ENCODE measurements at regions of chr15 and their contacts with region 1.

Region 1: DNA sequence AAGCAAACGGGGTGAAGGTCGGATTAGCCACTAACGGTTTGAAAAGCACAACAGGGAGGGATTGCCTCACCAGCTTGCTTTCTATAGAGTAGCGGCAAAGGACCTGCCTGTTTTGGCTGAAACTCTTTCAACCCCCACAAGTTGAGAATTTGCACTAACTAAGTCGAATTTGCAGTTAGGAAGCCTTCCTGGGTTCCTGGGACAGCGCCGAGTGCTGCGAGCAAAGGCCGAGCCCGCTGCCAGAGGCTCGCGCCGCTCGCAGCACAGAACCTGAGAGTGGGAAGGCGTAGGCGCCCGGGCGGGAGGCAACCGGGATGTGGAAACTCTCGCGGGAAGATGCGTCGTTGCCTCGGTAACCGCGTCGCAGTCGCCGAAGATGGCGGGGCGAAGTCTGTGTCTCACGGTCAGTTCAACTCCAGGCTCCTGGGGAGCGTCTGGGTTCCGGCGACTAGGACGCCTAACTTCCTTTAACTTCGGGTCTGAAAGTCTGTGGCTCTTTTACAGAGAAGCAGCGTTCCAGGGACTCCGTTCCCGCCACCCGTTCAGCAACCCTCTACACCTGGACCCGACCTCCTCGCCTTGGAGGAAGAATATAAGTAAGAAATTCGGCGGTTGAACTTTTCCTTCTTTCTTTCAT is at the start of gene TEX9:
- DNase-seq: peak; percentile 82
- H3K4me3 ChIP-seq: peak within 1 kb of the TSS; percentile 53 to 70 (median 69)
- H3K27ac ChIP-seq: peak within 1 kb of the TSS; percentile 31
- H3K4me1 ChIP-seq: peaks cover 16% of the 10 kb centered on the region
- H3K27me3 ChIP-seq: no peaks in the 10 kb centered on the region
- CTCF ChIP-seq: no peak
- total RNA-seq, gene TEX9: 7.7 to 11.2 TPM

Region 2: DNA sequence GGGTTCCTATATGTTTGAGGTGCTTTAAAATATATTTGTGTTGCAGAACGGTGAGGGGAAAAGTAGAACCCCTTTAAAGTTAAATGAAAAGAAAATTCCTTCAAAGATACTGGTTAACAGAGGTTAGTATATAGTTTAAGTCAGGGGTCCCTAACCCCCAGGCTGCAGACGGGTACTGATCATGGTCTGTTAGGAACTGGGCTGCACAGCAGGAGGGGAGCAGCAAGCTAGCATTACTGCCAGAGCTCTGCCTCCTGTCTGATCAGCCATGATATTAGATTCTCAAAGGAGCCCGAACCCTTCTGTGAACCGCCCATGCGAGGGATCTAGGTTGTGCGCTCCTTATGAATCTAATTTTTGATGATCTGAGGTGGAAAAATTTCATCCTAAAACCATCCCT is 84.0 kb before region 1 on chr15:
- CTCF ChIA-PET with region 1: no interaction called
- dilution Hi-C with region 1: no loop called
- in situ Hi-C with region 1: no loop called
- intact Hi-C with region 1: no loop called
- DNase-seq: no peak
- H3K4me3 ChIP-seq: no peak overlapping the region
- H3K27ac ChIP-seq: no peak overlapping the region
- H3K4me1 ChIP-seq: no peaks in the 10 kb centered on the region
- H3K27me3 ChIP-seq: peaks cover 7% of the 10 kb centered on the region
- CTCF ChIP-seq: no peak

Region 3: DNA sequence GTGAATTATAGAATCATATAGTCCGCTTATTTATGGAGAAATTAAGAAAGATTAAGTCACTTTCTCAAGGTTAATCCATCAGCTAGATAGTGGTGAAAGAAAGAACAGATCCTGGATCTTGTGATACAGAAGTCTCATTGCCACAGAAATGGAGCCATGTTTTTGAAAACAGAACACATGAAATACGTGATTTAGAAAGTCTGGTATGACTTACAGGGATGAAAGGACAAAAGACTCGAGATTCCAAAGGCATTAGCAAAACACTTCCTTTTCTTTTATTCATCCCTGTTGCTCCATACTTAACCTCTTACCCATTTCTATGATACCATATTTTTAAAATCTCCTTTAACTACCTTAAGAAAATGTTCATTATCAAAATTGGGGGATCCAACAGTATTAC is 40.0 kb before region 1 on chr15:
- CTCF ChIA-PET with region 1: no interaction called
- dilution Hi-C with region 1: no loop called
- in situ Hi-C with region 1: no loop called
- intact Hi-C with region 1: loop called (anchors 5 kb)
- DNase-seq: peak; percentile 42
- H3K4me3 ChIP-seq: no peak overlapping the region
- H3K27ac ChIP-seq: no peak overlapping the region
- H3K4me1 ChIP-seq: peaks cover 24% of the 10 kb centered on the region
- H3K27me3 ChIP-seq: no peaks in the 10 kb centered on the region
- CTCF ChIP-seq: no peak